ENCODE measurements at regions of chr20 and their contacts with region 1.

Region 1: GRCh38 chr20:47258745-47259695 is 97.5 kb downstream of the ZMYND8 start:
- DNase-seq: peak; percentile 76
- ATAC-seq: peak; percentile 64 to 67

Region 2: DNA sequence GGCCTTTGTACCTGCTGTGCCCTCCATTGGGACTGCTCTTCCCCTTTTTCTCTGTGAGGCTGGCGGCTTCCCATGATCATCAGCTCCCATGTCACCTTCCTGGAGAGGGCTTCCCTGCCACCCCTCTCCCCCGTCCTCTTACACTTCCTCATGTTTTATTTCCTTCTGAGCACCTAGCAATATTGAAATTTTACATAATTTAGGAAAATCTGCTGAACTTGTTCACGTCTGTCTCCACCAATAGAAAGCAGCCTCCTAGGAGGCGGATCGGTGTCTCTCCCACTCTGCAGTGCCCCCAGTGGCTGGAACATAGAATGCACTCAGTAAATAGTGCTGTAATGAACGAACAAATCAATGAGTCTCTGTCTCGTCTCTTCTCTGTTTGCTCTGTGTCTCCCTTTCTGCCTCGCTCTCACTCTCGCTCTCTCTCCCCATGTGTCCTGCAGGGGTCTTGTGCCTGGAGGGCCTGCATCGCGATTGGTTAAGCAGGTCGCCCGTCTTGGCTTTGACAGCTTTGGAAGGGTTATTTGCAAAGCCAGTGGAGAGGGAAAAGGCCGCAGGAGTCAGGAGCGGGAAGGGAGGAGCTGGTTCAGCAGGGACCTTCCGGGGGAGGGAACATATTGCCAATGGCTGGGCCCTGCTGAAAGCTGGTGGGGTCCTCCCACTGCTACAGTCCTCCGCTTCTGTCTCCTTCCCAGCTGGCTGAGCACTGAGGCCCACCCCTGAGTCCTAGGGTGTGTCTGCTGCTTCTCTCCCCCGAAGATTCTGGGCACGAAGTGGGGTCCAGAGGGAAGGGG is 696.4 kb before region 1 on chr20:
- intact Hi-C with region 1: no loop called
- DNase-seq: peak; percentile 74
- ATAC-seq: peak; percentile 87 to 89

Region 3: GRCh38 chr20:47213966-47214365 is 45.1 kb before region 1 on chr20:
- intact Hi-C with region 1: loop called in 1 of 2 experiments (anchors 5 kb)
- DNase-seq: no peak
- ATAC-seq: peak; percentile 23 to 35

Measured in left cardiac atrium (tissue), 4 donors.